ENCODE measurements at regions of chr10 and their contacts with region 1.

Region 1: DNA sequence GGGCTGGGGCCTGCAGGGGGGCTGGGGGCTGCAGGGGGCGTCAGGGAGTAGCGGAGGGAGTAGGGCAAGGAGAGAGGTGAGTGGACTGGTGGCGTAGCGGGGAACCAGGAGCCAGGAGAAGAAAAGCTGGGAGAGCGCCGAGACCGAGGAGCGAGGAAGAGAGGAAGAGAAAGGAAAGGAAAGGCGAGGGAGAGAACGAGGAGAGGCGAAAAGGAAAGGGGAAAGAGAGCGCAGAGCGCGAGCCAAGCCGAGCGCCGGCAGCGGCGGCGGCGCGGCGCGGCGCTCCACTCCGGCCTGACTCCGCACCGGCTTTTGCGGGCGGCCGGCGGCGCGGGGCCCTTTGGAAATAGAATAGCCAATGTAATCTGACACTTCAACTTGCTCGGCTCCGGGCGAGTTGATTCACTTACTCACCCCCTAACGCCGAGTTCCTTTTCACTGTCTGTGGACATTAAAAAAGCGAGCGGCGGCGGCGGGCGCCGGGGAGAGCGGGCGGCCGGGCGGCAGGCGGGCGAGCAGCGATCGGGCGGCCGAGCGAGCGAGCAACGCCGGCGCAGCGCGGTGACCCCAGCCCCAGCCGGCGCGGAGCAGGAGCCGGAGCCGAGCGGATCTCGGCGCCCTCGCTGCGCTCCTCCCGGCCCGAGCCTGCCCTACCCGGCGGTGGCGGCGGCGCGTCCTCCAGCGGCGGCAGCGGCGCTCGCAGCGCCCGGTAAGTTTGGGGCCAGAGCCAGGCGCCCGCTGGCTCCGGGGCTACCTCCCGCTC is at the start of gene ZMIZ1:
- DNase-seq: peak; percentile 87 to 93
- H3K4me3 ChIP-seq: peak within 1 kb of the TSS; percentile 85
- H3K27ac ChIP-seq: peak within 1 kb of the TSS; percentile 33
- H3K4me1 ChIP-seq: peaks cover 37% of the 10 kb centered on the region
- H3K27me3 ChIP-seq: no peaks in the 10 kb centered on the region
- CTCF ChIP-seq: no peak; the same call in 1 of the 2 replicates
- total RNA-seq, gene ZMIZ1: 47.6 and 48.5 TPM in 2 replicates

Region 2: DNA sequence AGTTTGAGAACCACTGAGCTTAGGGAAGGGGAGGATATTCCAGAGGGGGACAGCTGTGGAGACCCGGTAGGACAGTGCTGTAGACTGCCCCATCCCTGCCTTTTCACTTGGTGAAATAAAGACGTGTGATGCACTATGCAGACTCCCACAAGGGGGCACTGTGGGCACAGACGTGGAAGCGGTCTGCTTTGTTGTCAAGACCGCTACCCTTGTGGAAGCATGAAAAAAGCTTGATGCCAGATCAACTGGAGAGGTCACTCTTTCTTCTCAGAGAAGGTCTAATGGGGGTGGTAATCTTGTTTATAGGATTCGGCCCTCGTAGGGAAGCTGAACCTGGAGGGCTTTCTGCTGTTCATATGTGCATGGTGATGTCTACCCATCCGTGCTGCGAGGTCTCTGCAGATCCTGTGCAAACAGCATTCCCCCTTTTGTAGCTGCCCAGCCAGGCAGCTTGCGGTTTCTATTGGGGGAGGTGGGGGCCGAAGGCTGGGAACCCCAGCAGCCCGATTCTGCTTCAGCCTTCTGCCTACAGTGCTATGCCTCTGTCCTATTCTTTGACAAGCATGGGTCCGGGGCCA is 1021.3 kb before region 1 on chr10:
- CTCF ChIA-PET with region 1: interaction called, 3 read pairs
- POLR2A ChIA-PET with region 1: no interaction called
- intact Hi-C with region 1: loop called (anchors 2 kb)
- DNase-seq: peak; percentile 68 to 86
- H3K4me3 ChIP-seq: no peak overlapping the region
- H3K27ac ChIP-seq: no peak overlapping the region
- H3K4me1 ChIP-seq: no peaks in the 10 kb centered on the region
- H3K27me3 ChIP-seq: no peaks in the 10 kb centered on the region
- CTCF ChIP-seq: peak; percentile 96

Region 3: DNA sequence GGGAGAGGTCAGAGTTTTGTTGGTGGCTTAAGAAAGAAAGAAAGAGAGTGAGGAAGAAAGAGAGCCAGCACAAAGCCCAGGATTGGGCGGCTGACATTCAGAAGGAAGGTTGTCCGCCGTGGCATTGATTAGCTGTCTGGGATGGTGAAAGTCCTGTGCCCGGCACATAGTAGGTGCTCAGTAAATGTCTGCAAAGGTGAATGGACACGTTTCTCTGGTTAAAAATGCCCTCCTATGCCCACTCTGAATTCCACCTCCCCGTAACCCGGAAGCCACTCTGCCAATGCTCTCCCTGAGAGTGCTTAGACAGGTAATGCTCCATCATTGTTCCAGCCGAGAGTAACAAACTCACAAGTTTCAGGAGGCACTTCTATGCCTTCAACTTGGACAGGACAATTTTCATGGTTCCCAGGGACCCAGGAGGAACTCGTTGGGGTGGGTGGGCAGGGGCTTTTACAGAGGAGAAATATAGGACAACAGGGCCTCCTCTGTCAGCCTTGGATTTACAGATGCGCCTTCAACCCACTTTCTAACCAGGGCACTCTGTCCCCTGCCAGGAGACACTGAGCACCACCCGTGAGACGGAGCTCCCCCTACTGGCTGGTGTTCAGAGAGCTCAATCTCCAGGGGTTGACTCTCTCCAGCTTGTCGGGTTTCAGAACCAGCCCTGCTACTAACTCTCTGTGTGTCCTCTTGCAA is 411.4 kb before region 1 on chr10:
- CTCF ChIA-PET with region 1: interaction called, 3 read pairs
- POLR2A ChIA-PET with region 1: no interaction called
- intact Hi-C with region 1: loop called (anchors 2 kb)
- DNase-seq: peak; percentile 40 to 77
- H3K4me3 ChIP-seq: no peak overlapping the region
- H3K27ac ChIP-seq: no peak overlapping the region
- H3K4me1 ChIP-seq: peaks cover 13% of the 10 kb centered on the region
- H3K27me3 ChIP-seq: peaks cover 6% of the 10 kb centered on the region; the same call in 1 of the 2 replicates
- CTCF ChIP-seq: peak; percentile 83

Region 4: DNA sequence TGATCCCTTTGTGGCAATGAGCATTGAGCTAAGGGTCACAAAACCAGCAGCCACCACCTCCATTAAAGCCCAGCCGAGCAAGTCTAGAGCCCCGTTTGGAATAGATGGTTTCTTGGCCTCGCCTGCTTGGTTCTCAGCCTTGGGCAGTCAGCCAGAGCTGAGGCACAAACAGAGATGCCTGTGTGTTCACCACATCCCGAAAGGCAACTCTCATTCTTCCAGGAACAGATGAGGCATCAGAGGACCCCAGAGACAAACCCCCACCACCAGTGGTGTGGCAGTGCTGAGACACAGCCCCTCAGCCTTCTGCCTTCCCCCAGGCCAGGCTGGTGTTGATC is 203.2 kb before region 1 on chr10:
- CTCF ChIA-PET with region 1: no interaction called
- POLR2A ChIA-PET with region 1: no interaction called
- intact Hi-C with region 1: loop called (anchors 10 kb)
- DNase-seq: no peak
- H3K4me3 ChIP-seq: no peak overlapping the region
- H3K27ac ChIP-seq: no peak overlapping the region
- H3K4me1 ChIP-seq: peaks cover 11% of the 10 kb centered on the region
- H3K27me3 ChIP-seq: no peaks in the 10 kb centered on the region
- CTCF ChIP-seq: no peak

Region 5: GRCh38 chr10:79112881-79113431 is 44.2 kb after region 1 on chr10:
- CTCF ChIA-PET with region 1: no interaction called
- POLR2A ChIA-PET with region 1: no interaction called
- intact Hi-C with region 1: loop called (anchors 5 kb)
- DNase-seq: no peak
- H3K4me3 ChIP-seq: no peak overlapping the region
- H3K27ac ChIP-seq: no peak overlapping the region
- H3K4me1 ChIP-seq: peaks cover 6% of the 10 kb centered on the region; the same call in 1 of the 2 replicates
- H3K27me3 ChIP-seq: no peaks in the 10 kb centered on the region
- CTCF ChIP-seq: no peak

Region 6: DNA sequence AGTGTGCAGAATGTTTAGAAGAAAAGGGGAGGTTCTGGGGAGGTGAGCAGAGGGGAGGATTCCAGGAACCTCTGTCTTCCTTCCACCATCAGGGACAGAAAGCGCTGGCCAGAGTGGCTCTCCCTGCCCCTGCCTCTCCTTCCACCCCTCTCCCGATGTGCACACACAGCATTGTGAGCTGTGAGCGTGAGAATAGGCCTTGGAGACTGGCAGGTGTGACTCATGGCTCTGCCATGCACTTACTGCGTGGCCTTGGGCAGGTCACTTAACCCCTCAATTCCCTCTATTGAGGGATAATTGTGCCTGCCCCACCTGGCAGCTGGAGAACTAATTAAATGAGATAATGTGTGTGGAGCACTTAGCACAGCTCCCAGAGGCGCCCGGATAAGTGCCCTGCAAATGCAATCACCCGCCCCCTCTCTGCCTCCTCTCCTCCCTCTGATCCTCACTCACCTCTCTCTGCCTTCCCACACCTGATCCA is 115.4 kb after region 1 on chr10:
- CTCF ChIA-PET with region 1: interaction called, 3 read pairs
- POLR2A ChIA-PET with region 1: no interaction called
- intact Hi-C with region 1: loop called (anchors 1 kb)
- DNase-seq: peak; percentile 91 to 96
- H3K4me3 ChIP-seq: no peak overlapping the region
- H3K27ac ChIP-seq: peak overlapping the region; percentile 54
- H3K4me1 ChIP-seq: peaks cover 44% of the 10 kb centered on the region
- H3K27me3 ChIP-seq: no peaks in the 10 kb centered on the region
- CTCF ChIP-seq: no peak